Activated T-helper 1 cell treated with anti-CD3 and anti-CD28 coated beads, Interleukin-12 subunit alpha, Interleukin-12 subunit beta, Interleukin-2, Interleukin-4 antibody, amounts not matched to agents 30 ng/mL and 10 ng/mL and 1 ng/mL, durations not matched to agents 14 hours and 24 hours and 36 hours (primary cell): ENCODE measurements at regions of chr13 and their contacts with region 1.

Region 1: GRCh38 chr13:51583875-51584730 is at the start of gene WDFY2:
- DNase-seq: peak; percentile 99
- H3K4me3 Mint-ChIP-seq: peak within 1 kb of the TSS; percentile 94
- H3K27ac Mint-ChIP-seq: peak within 1 kb of the TSS; percentile 96
- H3K4me1 Mint-ChIP-seq: peaks cover 42% of the 10 kb centered on the region
- H3K27me3 Mint-ChIP-seq: no peaks in the 10 kb centered on the region
- total RNA-seq, gene WDFY2: 7.5 and 11.4 TPM in 2 replicates

Region 2: DNA sequence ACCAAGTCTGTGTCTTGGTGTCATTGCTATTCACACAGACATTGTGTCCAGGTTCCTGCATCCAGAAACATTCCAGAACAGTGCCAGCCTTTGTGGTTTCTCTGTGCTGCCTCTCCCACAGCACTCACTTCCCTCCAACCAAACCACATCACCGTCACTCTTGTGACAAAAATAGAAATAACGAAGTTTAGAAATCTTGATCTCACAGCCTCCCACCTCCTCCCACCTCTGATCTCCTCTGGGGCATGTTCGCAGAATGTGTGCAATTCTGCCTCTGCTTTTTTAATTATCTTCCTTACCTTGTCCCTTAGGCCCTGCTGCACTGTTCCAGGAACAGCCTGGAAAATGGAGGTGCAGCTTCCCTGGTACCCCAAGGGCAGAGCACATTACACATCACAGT is 253.3 kb before region 1 on chr13:
- intact Hi-C with region 1: loop called (anchors 5 kb)
- DNase-seq: no peak
- H3K4me3 Mint-ChIP-seq: no peak overlapping the region
- H3K27ac Mint-ChIP-seq: peak overlapping the region; percentile 69
- H3K4me1 Mint-ChIP-seq: peaks cover 22% of the 10 kb centered on the region
- H3K27me3 Mint-ChIP-seq: no peaks in the 10 kb centered on the region

Region 3: DNA sequence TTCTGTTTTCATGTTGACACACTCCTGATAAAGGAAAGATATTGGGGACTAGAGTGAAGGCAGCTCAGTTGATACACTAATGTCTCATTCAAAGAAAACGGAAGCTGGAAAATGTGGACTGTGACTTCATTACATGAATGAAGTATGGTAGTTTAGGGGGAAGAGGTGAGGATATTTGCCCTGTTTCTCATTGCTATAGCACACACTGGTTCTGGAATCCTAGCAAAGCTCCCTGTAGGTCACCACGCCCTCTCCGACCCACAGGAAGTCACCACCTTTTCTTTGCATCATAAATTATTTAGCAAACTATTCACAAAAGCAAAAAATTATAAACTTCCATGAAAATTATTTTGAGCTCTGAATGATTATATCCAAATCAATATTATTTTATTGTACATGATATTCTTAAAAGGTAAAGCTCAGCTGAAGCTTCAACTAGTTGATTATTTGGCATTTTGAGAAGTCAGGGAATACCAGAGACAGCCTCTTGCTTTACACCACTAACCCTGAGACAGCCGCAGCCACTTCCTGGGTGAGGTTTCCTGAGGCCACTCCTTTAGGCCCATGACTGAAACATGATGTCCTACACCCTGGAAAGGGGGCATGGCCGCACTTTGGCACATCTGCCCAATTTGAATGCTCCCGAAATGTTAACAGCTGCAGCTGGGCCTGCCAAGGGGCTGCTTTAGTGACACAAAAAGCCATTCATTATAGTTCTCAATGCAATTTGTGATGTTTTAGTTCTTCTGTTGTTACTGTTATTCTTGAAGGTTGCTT is 49.9 kb before region 1 on chr13:
- intact Hi-C with region 1: loop called (anchors 5 kb)
- DNase-seq: peak; percentile 46
- H3K4me3 Mint-ChIP-seq: peak overlapping the region; percentile 26
- H3K27ac Mint-ChIP-seq: peak overlapping the region; percentile 70
- H3K4me1 Mint-ChIP-seq: peaks cover 50% of the 10 kb centered on the region
- H3K27me3 Mint-ChIP-seq: no peaks in the 10 kb centered on the region

Region 4: DNA sequence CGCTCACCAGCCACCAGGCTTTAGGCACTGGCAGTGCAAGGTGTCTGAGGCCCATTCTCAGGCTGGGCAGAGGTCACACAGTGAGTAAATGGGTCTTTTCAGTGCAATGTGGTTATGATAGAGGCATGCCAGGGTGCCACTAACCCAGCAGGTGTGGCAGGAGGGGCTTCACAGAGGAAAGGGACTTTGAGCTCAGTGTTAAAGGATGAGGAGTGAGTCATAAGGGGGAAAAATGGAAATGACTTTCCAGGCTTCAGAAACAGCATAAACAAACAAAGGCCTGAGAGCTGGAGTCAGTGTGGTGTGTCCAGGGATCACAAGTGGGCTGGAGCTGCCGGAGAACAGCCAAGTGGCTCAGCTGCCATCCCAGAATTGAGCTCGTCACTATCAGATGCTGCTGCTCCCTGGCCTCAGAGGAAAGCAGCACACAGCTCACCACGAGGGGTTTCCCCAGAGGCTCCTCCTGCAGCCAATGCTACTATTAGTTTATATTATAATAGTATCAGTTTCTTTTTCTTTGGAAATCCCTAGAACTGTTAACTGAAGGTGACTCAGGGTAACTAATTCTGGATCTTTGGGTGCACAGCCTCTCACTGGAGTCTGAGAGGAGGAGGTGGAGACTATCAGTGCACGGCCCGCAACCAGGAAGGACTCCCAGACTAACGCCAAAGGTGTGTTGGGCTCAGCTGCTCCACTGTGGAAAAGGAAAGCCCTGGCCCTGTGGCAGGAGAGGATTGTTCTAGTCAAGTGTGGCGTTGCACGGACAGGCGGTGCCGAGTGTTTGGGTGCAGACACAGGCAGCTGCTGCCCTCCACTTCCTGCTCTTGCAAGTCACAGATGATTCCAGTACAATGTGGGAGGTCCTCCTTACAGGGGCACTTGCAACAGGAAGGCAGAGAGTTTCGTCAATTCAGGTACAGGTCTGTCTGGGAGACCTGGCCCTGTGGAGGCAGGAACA is 180.4 kb after region 1 on chr13:
- intact Hi-C with region 1: loop called (anchors 1 kb)
- DNase-seq: peak; percentile 43
- H3K4me3 Mint-ChIP-seq: peak overlapping the region; percentile 79
- H3K27ac Mint-ChIP-seq: peak overlapping the region; percentile 96
- H3K4me1 Mint-ChIP-seq: peaks cover 41% of the 10 kb centered on the region
- H3K27me3 Mint-ChIP-seq: no peaks in the 10 kb centered on the region

Region 5: GRCh38 chr13:52450012-52450792 is 866.1 kb after region 1 on chr13 and contains the start of gene VPS36:
- intact Hi-C with region 1: loop called (anchors 5 kb)
- DNase-seq: peak; percentile 93
- H3K4me3 Mint-ChIP-seq: peak within 1 kb of the TSS; percentile 96
- H3K27ac Mint-ChIP-seq: peak within 1 kb of the TSS; percentile 93
- H3K4me1 Mint-ChIP-seq: peaks cover 57% of the 10 kb centered on the region
- H3K27me3 Mint-ChIP-seq: peaks cover 2% of the 10 kb centered on the region
- total RNA-seq, gene VPS36: 47.8 and 49.2 TPM in 2 replicates